ENCODE measurements at regions of chr3 and their contacts with region 1.

Region 1: DNA sequence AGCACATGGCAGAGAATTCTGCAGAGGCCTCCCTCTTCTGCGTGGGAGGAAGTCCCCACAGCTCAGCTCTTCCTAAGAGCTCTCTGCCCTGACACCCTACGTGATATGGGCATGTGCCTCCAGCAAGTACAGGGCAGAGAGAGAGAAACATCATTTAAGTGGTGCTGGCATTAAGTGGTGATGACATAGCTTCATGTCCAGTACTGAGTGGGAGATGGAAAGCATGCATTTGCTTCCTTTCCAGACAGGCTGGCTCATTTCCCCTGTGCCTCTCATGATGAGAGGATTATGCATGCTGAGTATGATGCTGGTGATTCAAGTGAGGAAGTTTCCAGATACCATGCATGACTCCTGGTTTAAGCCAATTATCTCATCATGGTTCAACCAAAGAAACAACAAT is 26.9 kb downstream of the BFSP2 start:
- DNase-seq: no peak
- H3K4me3 ChIP-seq: no peak overlapping the region
- H3K27ac ChIP-seq: no peak overlapping the region
- H3K4me1 ChIP-seq: no peaks in the 10 kb centered on the region
- H3K27me3 ChIP-seq: no peaks in the 10 kb centered on the region
- CTCF ChIP-seq: no peak
- EP300 ChIP-seq: no peak
- POLR2A ChIP-seq: no peak

Region 2: DNA sequence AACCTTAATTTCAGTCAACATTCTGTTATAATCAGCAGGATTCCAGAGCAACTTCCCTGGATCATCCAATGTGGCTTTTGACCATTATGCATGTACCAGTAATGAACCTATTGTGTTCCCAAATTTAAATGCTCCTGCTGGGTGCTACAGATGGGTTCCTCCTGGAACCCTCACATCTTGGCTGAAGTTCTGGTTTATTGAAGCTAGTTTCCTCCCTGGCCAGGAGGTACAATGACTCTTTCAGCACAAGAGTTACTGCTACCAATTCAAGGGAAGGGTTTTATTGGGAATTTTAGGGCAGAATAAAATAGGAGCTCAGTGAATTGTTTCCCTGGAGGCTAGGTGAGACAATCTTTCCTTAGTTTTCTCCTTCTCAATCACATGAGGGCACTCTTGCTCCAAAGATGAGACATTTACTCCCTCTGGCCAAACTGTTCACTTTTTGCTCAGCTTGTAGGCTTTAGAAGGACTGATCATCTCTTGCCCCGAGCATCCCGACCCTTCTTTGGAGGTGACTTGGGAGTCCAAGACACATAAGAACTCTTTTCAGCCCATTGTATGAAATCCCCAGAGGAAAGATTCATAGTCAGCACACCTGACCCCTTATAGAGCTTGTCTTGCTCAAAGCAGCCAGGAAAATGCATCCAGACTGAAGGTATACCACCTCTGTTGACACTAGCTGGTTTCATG is 695.7 kb before region 1 on chr3:
- intact Hi-C with region 1: loop called in 2 of 4 experiments (anchors 5 to 10 kb)
- DNase-seq: no peak
- H3K4me3 ChIP-seq: no peak overlapping the region
- H3K27ac ChIP-seq: no peak overlapping the region
- H3K4me1 ChIP-seq: no peaks in the 10 kb centered on the region
- H3K27me3 ChIP-seq: no peaks in the 10 kb centered on the region
- CTCF ChIP-seq: no peak
- EP300 ChIP-seq: no peak
- POLR2A ChIP-seq: no peak

Region 3: GRCh38 chr3:133295199-133295901 is 131.4 kb before region 1 on chr3:
- intact Hi-C with region 1: no loop called
- DNase-seq: no peak
- H3K4me3 ChIP-seq: no peak overlapping the region
- H3K27ac ChIP-seq: no peak overlapping the region
- H3K4me1 ChIP-seq: peaks cover 2% of the 10 kb centered on the region
- H3K27me3 ChIP-seq: no peaks in the 10 kb centered on the region
- CTCF ChIP-seq: no peak
- EP300 ChIP-seq: no peak
- POLR2A ChIP-seq: no peak

Region 4: GRCh38 chr3:133531981-133532380 is 105.3 kb after region 1 on chr3:
- intact Hi-C with region 1: no loop called
- DNase-seq: no peak
- H3K4me3 ChIP-seq: no peak overlapping the region
- H3K27ac ChIP-seq: no peak overlapping the region
- H3K4me1 ChIP-seq: peaks cover 8% of the 10 kb centered on the region
- H3K27me3 ChIP-seq: no peaks in the 10 kb centered on the region
- CTCF ChIP-seq: no peak
- EP300 ChIP-seq: no peak
- POLR2A ChIP-seq: no peak

Region 5: GRCh38 chr3:133831966-133832802 is 405.5 kb after region 1 on chr3:
- intact Hi-C with region 1: no loop called
- DNase-seq: no peak
- H3K4me3 ChIP-seq: no peak overlapping the region
- H3K27ac ChIP-seq: no peak overlapping the region
- H3K4me1 ChIP-seq: no peaks in the 10 kb centered on the region
- H3K27me3 ChIP-seq: no peaks in the 10 kb centered on the region
- CTCF ChIP-seq: no peak
- EP300 ChIP-seq: no peak
- POLR2A ChIP-seq: no peak

Measured in ovary (tissue), 10 donors.